Naive thymus-derived CD4-positive, alpha-beta T cell (primary cell): ENCODE measurements at regions of chr12 and their contacts with region 1.

Region 1: DNA sequence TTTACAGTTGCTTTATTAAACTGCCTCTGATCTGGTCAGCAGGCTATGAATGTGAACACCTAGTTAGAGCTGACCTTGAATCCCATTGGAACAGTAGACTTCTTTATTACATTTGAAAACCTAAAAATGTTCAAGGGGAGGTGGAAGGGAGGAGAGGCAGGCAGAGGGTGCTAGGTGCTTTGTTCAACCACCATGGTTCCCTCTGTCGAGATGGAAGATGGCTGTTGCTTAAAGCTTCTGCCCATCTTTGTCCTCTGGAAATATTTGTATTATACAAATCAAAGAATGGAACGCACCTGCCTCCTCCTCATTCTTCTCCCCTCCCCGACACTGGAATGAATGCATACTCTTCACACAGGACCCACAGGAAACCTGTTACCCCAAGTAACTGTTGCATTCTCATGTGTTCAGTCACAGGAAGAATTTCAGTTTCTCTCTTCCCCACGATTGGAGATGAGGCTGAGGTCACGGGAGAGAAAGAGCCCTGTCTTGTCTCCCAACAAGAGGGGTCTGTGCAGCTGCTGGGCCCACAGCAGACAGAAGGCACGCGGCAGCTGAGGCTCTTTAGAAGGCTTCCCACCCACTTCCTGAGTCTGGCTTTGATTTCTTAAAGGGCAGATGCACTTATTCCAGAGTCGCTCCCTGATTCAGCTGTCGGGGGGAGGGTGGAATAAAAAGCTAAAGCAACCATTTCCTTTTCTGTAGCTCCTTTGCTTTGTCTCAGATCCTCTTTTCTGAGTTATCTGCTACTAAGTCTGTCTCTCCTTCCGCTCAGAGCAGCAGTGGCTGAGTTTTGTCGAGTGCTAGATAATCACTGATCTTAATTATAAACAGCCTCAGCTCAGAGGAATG is 217.9 kb upstream of the BTG1 start:
- DNase-seq: peak in 8 of 9 donors; percentile 23 to 75 (median 62)
- ATAC-seq: peak; percentile 65
- H3K4me3 ChIP-seq: peak overlapping the region; percentile 49
- H3K4me3 Mint-ChIP-seq: peak overlapping the region; percentile 68 to 90 (median 80)
- H3K27ac ChIP-seq: peak overlapping the region; percentile 69
- H3K27ac Mint-ChIP-seq: peak overlapping the region; percentile 92 to 99 (median 97)
- H3K4me1 ChIP-seq: peaks cover 35 to 67% of the 10 kb centered on the region in 2 donors
- H3K4me1 Mint-ChIP-seq: peaks cover 33 to 88% (median 76%) of the 10 kb centered on the region in 7 donors
- H3K27me3 ChIP-seq: no peaks in the 10 kb centered on the region
- H3K27me3 Mint-ChIP-seq: no peaks in the 10 kb centered on the region

Region 2: DNA sequence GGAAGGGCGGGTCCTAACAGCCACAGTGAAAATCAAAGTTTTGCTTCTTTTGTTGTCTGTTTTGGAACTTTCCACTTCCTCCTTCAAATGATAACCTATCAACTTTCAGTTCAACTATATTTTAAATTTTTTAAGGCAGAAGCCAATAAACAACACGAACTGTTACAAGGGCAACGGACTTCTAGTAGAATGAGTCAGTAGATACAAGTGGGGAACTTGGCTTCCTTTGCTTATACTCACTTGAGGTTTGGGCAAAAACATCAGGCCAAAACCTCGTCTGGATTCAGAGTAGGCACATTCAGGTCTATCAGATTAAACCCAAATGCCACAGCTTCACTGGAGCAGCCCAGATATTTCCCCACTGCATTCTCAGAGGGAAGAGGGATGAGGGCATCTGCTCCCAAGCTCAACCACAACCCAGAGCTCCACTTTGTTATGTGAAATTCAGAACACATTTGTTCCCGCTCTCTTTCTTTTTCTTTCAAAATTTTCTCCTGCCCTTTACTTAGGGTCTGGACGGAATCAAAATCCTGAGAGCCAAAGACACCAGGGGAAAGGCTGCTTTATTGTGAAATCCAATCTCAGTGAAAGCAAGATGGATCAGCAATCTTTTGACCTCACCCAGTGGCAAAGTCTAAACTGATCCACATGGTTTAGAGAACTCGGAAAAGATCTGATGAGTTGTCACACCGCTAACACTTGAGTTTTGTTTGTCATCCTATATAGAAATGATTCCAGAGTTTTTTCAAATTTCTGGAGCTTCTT is 65.4 kb before region 1 on chr12:
- CTCF ChIA-PET with region 1: no interaction called
- POLR2A ChIA-PET with region 1: interaction called, 9 read pairs
- intact Hi-C with region 1: loop called in 1 of 2 experiments (anchors 1 kb)
- DNase-seq: peak in 7 of 9 donors; percentile 29 to 75 (median 58)
- ATAC-seq: peak; percentile 83
- H3K4me3 ChIP-seq: no peak overlapping the region
- H3K4me3 Mint-ChIP-seq: peak overlapping the region in 9 of 10 donors; percentile 9 to 80 (median 63)
- H3K27ac ChIP-seq: peak overlapping the region; percentile 57
- H3K27ac Mint-ChIP-seq: peak overlapping the region in 2 of 9 donors; percentile 85 to 96
- H3K4me1 ChIP-seq: peaks cover 17 to 42% of the 10 kb centered on the region in 2 donors
- H3K4me1 Mint-ChIP-seq: peaks cover 8 to 33% (median 27%) of the 10 kb centered on the region in 7 donors
- H3K27me3 ChIP-seq: no peaks in the 10 kb centered on the region
- H3K27me3 Mint-ChIP-seq: no peaks in the 10 kb centered on the region

Region 3: GRCh38 chr12:92349635-92350034 is 13.9 kb before region 1 on chr12:
- CTCF ChIA-PET with region 1: no interaction called
- POLR2A ChIA-PET with region 1: interaction called, 4 read pairs
- intact Hi-C with region 1: loop called in 1 of 2 experiments (anchors 1 kb)
- DNase-seq: no peak
- ATAC-seq: no peak
- H3K4me3 ChIP-seq: no peak overlapping the region
- H3K4me3 Mint-ChIP-seq: no peak overlapping the region
- H3K27ac ChIP-seq: no peak overlapping the region
- H3K27ac Mint-ChIP-seq: peak overlapping the region in 1 of 9 donors; percentile 55
- H3K4me1 ChIP-seq: no peaks in the 10 kb centered on the region
- H3K4me1 Mint-ChIP-seq: peaks cover 0 to 32% (median 15%) of the 10 kb centered on the region in 7 donors
- H3K27me3 ChIP-seq: no peaks in the 10 kb centered on the region
- H3K27me3 Mint-ChIP-seq: no peaks in the 10 kb centered on the region

Region 4: GRCh38 chr12:92396647-92397252 is 33.2 kb after region 1 on chr12:
- CTCF ChIA-PET with region 1: interaction called, 4 read pairs
- POLR2A ChIA-PET with region 1: interaction called, 57 read pairs
- intact Hi-C with region 1: loop called (anchors 1 to 2 kb)
- DNase-seq: no peak
- ATAC-seq: no peak
- H3K4me3 ChIP-seq: no peak overlapping the region
- H3K4me3 Mint-ChIP-seq: peak overlapping the region in 8 of 10 donors; percentile 9 to 76 (median 62)
- H3K27ac ChIP-seq: peak overlapping the region; percentile 85
- H3K27ac Mint-ChIP-seq: peak overlapping the region; percentile 90 to 100 (median 98)
- H3K4me1 ChIP-seq: peaks cover 76 to 84% of the 10 kb centered on the region in 2 donors
- H3K4me1 Mint-ChIP-seq: peaks cover 56 to 100% (median 93%) of the 10 kb centered on the region in 7 donors
- H3K27me3 ChIP-seq: no peaks in the 10 kb centered on the region
- H3K27me3 Mint-ChIP-seq: no peaks in the 10 kb centered on the region

Region 5: DNA sequence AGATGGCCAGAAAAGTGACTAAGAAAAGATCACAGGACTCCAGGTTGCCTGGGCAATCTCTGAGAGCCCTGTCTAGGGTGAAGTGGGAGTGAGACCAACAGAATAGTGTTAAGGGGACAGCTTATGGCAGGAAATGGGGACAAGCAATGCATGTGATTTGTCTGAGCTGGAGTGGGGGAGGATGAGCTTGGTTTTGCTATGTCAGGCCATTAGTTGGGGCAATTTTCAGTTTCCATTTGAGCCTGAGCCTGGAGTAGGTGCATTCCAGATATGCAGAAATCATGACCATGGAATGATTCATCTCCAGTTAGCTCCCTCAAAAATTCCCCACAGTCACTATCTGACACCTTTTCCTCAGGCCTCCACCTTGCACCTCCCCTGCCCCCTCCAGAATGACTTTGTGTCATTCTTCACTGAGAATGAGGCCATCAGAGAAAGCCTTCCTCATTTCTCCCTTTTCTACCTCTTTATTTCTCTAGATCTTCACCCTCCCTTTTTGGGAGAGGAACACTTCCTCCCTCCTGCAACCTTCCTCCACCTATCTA is 188.4 kb after region 1 on chr12:
- CTCF ChIA-PET with region 1: no interaction called
- POLR2A ChIA-PET with region 1: interaction called, 13 read pairs
- intact Hi-C with region 1: no loop called
- DNase-seq: peak in 1 of 9 donors; percentile 51
- ATAC-seq: no peak
- H3K4me3 ChIP-seq: no peak overlapping the region
- H3K4me3 Mint-ChIP-seq: no peak overlapping the region
- H3K27ac ChIP-seq: no peak overlapping the region
- H3K27ac Mint-ChIP-seq: no peak overlapping the region
- H3K4me1 ChIP-seq: peaks cover 11 to 15% of the 10 kb centered on the region in 2 donors
- H3K4me1 Mint-ChIP-seq: peaks cover 21 to 32% (median 27%) of the 10 kb centered on the region in 7 donors
- H3K27me3 ChIP-seq: no peaks in the 10 kb centered on the region
- H3K27me3 Mint-ChIP-seq: no peaks in the 10 kb centered on the region

Region 6: GRCh38 chr12:92629349-92630065 is 266.0 kb after region 1 on chr12:
- CTCF ChIA-PET with region 1: no interaction called
- POLR2A ChIA-PET with region 1: no interaction called
- intact Hi-C with region 1: no loop called
- DNase-seq: no peak
- ATAC-seq: no peak
- H3K4me3 ChIP-seq: no peak overlapping the region
- H3K4me3 Mint-ChIP-seq: no peak overlapping the region
- H3K27ac ChIP-seq: no peak overlapping the region
- H3K27ac Mint-ChIP-seq: no peak overlapping the region
- H3K4me1 ChIP-seq: no peaks in the 10 kb centered on the region
- H3K4me1 Mint-ChIP-seq: no peaks in the 10 kb centered on the region
- H3K27me3 ChIP-seq: no peaks in the 10 kb centered on the region
- H3K27me3 Mint-ChIP-seq: peaks cover 0 to 4% (median 0%) of the 10 kb centered on the region in 5 donors